K562 (cell line): ENCODE measurements at regions of chr11 and their contacts with region 1.

Region 1: GRCh38 chr11:94897330-94897768 is 76.0 kb downstream of the CWC15 start:
- DNase-seq: peak; percentile 46 to 64 (median 58)
- ATAC-seq: peak; percentile 84
- H3K4me3 ChIP-seq: no peak overlapping the region
- H3K27ac ChIP-seq: no peak overlapping the region
- H3K4me1 ChIP-seq: no peaks in the 10 kb centered on the region
- H3K27me3 ChIP-seq: no peaks in the 10 kb centered on the region
- CTCF ChIP-seq: peak; percentile 71 to 86 (median 84)
- EP300 ChIP-seq: no peak
- POLR2A ChIP-seq: no peak
- RAD21 ChIP-seq: peak; percentile 62 to 80

Region 2: DNA sequence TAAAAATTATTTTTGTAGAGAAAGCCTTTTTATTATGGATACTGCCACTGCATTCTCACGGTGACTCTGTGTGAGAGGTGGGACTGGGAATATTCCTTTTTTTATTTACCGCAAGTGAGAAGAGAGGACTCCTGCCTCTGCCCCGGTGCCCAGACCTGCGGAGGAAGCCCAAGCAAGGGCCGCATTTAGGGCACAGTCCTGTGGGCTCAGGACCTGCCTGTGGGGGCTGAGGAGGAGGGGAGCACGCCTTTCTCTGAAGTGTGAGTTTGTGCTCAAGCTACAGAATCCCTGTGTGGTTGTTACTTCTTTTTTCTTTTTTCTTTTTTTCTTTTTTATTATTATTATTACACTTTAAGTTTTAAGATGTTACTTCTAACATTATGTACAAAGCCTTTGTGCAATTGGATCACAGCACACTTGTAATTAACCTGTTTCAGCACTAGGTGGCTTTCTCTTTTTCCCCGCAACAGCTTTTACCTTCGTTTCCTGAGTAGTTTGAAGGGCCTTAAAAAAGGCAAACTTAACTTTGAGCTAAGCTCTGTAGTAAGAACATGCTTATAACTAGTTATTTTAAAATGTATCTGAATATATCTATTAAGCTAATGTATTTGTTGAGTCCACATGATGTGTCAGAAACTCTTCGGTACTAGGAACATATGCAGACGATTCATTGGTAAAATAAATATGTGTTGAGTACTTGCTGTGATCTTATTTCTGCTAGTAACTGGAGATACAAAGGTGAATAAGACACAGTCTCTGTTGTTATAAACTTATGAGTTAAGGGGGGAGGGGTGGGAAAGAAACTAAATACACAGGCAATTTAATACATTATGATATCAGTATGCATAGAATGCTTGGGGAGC is 110.9 kb before region 1 on chr11:
- CTCF ChIA-PET with region 1: no interaction called
- POLR2A ChIA-PET with region 1: no interaction called
- in situ Hi-C with region 1: no loop called
- intact Hi-C with region 1: loop called (anchors 5 kb)
- DNase-seq: peak in 3 of 4 experiments; percentile 33 to 65 (median 39)
- ATAC-seq: peak; percentile 59
- H3K4me3 ChIP-seq: no peak overlapping the region
- H3K27ac ChIP-seq: peak overlapping the region; percentile 8; the same call in 1 of the 3 replicates
- H3K4me1 ChIP-seq: peaks cover 0 to 43% of the 10 kb centered on the region in 2 experiments; a peak in 3 of 5 replicates
- H3K27me3 ChIP-seq: no peaks in the 10 kb centered on the region
- CTCF ChIP-seq: peak; percentile 43 to 54 (median 53); a peak in 5 of 6 replicates
- EP300 ChIP-seq: no peak
- POLR2A ChIP-seq: no peak
- RAD21 ChIP-seq: peak; percentile 31 to 52; a peak in 2 of 4 replicates

Region 3: DNA sequence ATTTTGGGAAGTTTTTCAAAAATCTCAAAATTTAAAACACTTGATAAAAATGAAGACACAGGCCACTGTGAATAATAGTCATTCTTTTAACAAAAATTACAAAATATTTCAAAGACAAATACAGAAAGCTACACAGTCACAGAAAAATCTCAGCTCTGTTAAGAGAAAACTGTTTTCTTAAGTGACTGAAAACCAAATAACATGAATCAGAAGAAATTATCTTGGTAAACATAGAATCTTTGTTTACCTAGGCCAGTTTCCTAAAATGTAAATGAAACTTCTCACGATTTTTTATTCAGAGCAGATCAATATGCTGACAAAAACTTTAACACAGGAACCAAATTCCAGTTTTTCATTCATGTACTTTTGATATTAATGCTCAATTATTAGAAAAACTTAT is 106.9 kb after region 1 on chr11:
- CTCF ChIA-PET with region 1: no interaction called
- POLR2A ChIA-PET with region 1: no interaction called
- in situ Hi-C with region 1: no loop called
- intact Hi-C with region 1: no loop called
- DNase-seq: no peak
- ATAC-seq: no peak
- H3K4me3 ChIP-seq: no peak overlapping the region
- H3K27ac ChIP-seq: no peak overlapping the region
- H3K4me1 ChIP-seq: no peaks in the 10 kb centered on the region
- H3K27me3 ChIP-seq: no peaks in the 10 kb centered on the region; a peak in 1 of 5 replicates
- CTCF ChIP-seq: no peak
- EP300 ChIP-seq: no peak
- POLR2A ChIP-seq: no peak
- RAD21 ChIP-seq: no peak